ENCODE measurements at regions of chr9 and their contacts with region 1.

Region 1: GRCh38 chr9:113446323-113446740 is 17.2 kb upstream of the RGS3 start:
- DNase-seq: no peak

Region 2: DNA sequence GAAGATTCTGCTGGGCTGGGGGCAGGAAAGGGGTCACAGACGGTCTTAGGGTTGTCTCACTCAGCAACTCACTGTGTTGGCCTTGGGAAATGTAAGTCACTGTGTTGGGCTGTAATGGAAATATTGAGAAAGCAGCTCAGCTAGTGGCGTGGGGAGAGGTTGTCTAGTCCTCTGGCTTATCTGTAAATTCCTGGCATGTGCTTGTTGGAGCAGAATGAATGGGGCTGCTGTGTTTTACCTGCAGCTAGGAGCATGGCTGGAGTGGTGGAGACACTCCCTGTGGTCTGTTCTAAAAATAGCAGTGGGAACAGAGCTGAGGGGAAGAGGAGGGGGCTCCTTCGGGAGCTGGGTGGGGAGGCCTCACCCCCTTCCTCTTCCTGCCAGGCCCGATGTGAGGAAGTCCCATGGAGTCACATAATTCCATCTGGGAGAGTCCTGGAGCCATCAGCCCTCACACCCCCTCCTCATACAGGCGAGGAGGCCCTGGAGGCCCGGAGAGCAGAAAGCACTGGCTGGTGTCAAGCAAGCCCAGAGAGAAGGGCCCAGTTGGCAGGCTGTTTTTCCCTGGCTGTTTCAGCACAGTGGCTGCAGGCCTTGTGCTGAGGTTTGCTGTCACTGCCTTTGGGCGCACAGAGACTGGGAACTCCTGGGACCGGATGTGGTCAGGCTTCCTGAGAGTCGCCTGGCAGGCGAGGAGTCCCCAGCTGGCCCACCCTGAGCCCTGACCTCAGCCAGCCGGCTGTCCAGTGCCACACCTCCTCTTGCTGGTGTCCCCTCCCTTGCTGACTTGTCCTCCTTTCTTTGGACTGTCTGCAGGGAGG is 102.1 kb after region 1 on chr9:
- intact Hi-C with region 1: no loop called
- DNase-seq: peak in 7 of 10 donors; percentile 24 to 88 (median 43)

Region 3: GRCh38 chr9:113581865-113582697 is 135.7 kb after region 1 on chr9:
- intact Hi-C with region 1: loop called (anchors 2 kb)
- DNase-seq: peak in 9 of 10 donors; percentile 52 to 97 (median 78)

Region 4: DNA sequence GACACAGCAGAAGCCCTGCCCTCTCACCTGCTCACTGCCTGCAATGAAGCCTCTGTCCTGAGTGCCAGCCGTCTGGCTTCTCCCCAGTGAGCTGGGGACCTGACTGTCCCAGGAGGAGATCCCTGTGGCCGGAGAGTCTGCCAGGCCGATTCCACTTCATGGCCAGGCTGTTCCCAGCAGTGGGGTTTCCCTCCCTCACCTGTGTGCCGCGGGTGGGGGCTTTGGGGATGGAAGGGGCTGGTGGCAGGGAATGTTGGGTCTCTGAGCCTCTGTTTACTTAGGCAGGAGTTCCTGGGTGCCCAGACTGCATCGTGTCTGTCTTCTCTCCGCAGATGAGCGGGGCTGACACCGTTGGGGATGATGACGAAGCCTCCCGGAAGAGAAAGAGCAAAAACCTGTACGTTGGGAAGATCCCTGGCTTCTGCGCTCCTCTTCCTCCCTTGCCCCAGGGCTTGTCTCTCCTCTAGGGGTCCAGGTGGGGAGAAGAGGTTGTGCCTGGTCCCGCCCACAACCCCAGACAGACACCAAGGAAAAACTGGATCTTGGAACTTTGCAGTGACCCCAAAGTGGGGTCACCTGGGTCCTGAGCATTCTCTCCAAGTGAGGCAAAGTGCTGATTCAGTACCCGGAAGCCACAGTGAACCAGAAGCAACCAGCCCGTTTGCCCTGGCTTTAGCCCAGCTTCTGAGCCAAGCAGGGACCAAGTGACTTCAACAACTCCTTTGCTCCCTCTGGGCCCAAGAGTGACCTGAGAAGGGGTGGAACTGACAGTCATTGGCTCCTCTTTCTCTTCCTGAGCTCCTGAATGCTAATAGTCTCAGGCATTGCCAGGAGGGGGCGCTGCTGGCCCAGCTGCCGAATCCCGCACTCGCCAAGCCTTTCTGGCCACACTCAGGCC is 144.9 kb after region 1 on chr9:
- intact Hi-C with region 1: loop called (anchors 2 kb)
- DNase-seq: peak; percentile 74 to 98 (median 87)

Region 5: GRCh38 chr9:113657703-113658544 is 211.6 kb after region 1 on chr9:
- intact Hi-C with region 1: loop called (anchors 2 kb)
- DNase-seq: peak; percentile 74 to 97 (median 90)